ENCODE measurements at regions of chr21 and their contacts with region 1.

Region 1: GRCh38 chr21:38712071-38712470 is 93.7 kb upstream of the ETS2 start:
- DNase-seq: no peak
- ATAC-seq: peak; percentile 73
- H3K4me3 ChIP-seq: no peak overlapping the region
- H3K27ac ChIP-seq: no peak overlapping the region
- H3K4me1 ChIP-seq: no peaks in the 10 kb centered on the region
- H3K27me3 ChIP-seq: no peaks in the 10 kb centered on the region
- CTCF ChIP-seq: peak; percentile 24 to 45

Region 2: GRCh38 chr21:38514624-38515023 is 197.4 kb before region 1 on chr21:
- intact Hi-C with region 1: loop called in 1 of 2 experiments (anchors 5 kb)
- DNase-seq: no peak
- ATAC-seq: no peak
- H3K4me3 ChIP-seq: no peak overlapping the region
- H3K27ac ChIP-seq: no peak overlapping the region
- H3K4me1 ChIP-seq: no peaks in the 10 kb centered on the region
- H3K27me3 ChIP-seq: no peaks in the 10 kb centered on the region
- CTCF ChIP-seq: no peak

Region 3: GRCh38 chr21:40270047-40270446 is 1558.0 kb after region 1 on chr21:
- intact Hi-C with region 1: no loop called
- DNase-seq: peak in 2 of 4 donors; percentile 10 to 24
- ATAC-seq: no peak
- H3K4me3 ChIP-seq: no peak overlapping the region
- H3K27ac ChIP-seq: no peak overlapping the region
- H3K4me1 ChIP-seq: no peaks in the 10 kb centered on the region
- H3K27me3 ChIP-seq: no peaks in the 10 kb centered on the region
- CTCF ChIP-seq: no peak